ENCODE measurements at regions of chr11 and their contacts with region 1.

Region 1: GRCh38 chr11:66311965-66312548 is 4.8 kb downstream of the CD248 start:
- DNase-seq: peak; percentile 96 to 100 (median 99)
- H3K4me3 ChIP-seq: peak overlapping the region; percentile 66
- H3K4me3 Mint-ChIP-seq: peak overlapping the region; percentile 87 to 94 (median 93)
- H3K27ac ChIP-seq: peak overlapping the region; percentile 66
- H3K27ac Mint-ChIP-seq: peak overlapping the region; percentile 91 to 99 (median 98)
- H3K4me1 ChIP-seq: peaks cover 33% of the 10 kb centered on the region
- H3K4me1 Mint-ChIP-seq: peaks cover 19 to 34% (median 30%) of the 10 kb centered on the region in 3 donors
- H3K27me3 ChIP-seq: no peaks in the 10 kb centered on the region
- H3K27me3 Mint-ChIP-seq: peaks cover 0 to 3% of the 10 kb centered on the region in 2 donors

Region 2: GRCh38 chr11:66051766-66052663 is 260.0 kb before region 1 on chr11 and contains the start of gene SF3B2:
- CTCF ChIA-PET with region 1: no interaction called
- POLR2A ChIA-PET with region 1: no interaction called
- DNase-seq: peak; percentile 93 to 97 (median 95)
- H3K4me3 ChIP-seq: peak within 1 kb of the TSS; percentile 79
- H3K4me3 Mint-ChIP-seq: peak within 1 kb of the TSS; percentile 98 to 100 (median 99)
- H3K27ac ChIP-seq: peak within 1 kb of the TSS; percentile 86
- H3K27ac Mint-ChIP-seq: peak within 1 kb of the TSS; percentile 96 to 99 (median 99)
- H3K4me1 ChIP-seq: peaks cover 23% of the 10 kb centered on the region
- H3K4me1 Mint-ChIP-seq: peaks cover 27 to 38% (median 34%) of the 10 kb centered on the region in 3 donors
- H3K27me3 ChIP-seq: no peaks in the 10 kb centered on the region
- H3K27me3 Mint-ChIP-seq: peaks cover 4 to 6% of the 10 kb centered on the region in 2 donors
- total RNA-seq, gene SF3B2: 261 to 274 TPM

Region 3: DNA sequence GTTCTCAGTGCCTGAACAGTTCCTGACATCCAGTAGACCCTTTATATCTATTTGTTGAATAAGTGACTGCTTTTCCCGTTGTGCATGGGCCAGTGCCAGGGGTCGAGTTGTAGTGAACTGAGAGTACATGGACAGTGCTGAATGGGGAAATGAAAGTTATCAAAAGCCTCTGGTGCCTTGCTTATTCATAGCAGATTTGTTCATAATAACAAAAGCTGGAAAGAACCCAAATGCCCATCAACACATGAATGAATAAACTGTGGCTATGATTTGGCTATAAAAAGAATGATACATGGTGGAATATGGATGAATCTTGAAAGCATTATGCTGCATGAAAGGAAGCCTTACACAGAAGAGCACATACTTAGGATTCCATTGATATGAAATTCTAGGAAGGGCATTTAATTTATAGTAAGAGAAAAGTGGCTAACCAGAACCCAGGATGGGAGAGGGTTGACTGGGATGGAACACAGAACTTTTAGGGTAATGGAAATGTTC is 199.4 kb before region 1 on chr11:
- CTCF ChIA-PET with region 1: no interaction called
- POLR2A ChIA-PET with region 1: no interaction called
- DNase-seq: no peak
- H3K4me3 ChIP-seq: no peak overlapping the region
- H3K4me3 Mint-ChIP-seq: peak overlapping the region in 5 of 7 donors; percentile 2 to 58 (median 25)
- H3K27ac ChIP-seq: no peak overlapping the region
- H3K27ac Mint-ChIP-seq: peak overlapping the region; percentile 64 to 88 (median 80)
- H3K4me1 ChIP-seq: peaks cover 84% of the 10 kb centered on the region
- H3K4me1 Mint-ChIP-seq: peaks cover 89 to 99% (median 97%) of the 10 kb centered on the region in 3 donors
- H3K27me3 ChIP-seq: no peaks in the 10 kb centered on the region
- H3K27me3 Mint-ChIP-seq: no peaks in the 10 kb centered on the region

Region 4: DNA sequence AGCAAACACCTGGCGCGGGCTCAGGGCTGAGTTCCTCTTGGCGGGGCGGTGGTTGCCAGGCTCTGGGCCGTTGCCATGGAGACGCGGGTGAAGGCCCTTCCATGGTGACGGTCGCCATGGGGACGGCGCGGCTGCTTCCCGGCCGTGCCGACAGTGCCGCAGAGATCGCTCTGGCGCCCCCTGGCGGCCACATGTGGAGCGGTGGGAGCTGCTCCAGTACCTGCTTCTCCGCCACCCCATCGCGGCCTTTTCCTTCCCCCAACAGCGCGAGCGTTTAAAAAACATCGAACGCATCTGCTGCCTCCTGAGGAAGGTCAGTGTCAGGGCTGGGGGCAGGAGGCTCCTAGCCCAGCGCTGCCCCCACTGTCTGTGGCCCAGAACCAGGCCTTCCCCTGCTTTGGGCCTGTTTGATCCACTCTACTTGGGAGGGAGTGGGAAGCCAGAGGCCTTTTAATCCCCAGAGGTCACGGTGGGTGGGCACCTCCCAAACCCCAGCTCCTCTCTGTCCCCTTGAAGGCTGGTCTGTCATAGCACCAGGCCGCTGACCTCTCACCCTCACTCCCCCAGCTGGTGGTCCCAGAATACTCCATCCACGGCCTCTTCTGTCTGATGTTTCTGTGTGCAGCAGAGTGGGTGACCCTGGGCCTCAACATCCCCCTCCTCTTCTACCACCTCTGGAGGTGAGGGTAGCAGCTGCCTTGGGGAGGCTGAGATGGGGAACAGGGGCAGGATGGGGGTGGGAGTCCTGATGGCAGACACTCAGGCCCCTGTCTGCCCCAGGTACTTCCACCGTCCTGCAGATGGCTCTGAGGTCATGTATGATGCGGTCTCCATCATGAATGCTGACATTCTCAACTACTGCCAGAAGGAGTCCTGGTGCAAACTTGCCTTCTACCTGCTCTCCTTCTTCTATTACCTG is 29.3 kb before region 1 on chr11:
- CTCF ChIA-PET with region 1: interaction called, 39 read pairs
- POLR2A ChIA-PET with region 1: interaction called, 3 read pairs
- DNase-seq: peak; percentile 98 to 100 (median 100)
- H3K4me3 ChIP-seq: no peak overlapping the region
- H3K4me3 Mint-ChIP-seq: peak overlapping the region; percentile 35 to 85 (median 56)
- H3K27ac ChIP-seq: no peak overlapping the region
- H3K27ac Mint-ChIP-seq: peak overlapping the region; percentile 54 to 97 (median 92)
- H3K4me1 ChIP-seq: peaks cover 35% of the 10 kb centered on the region
- H3K4me1 Mint-ChIP-seq: peaks cover 31 to 49% (median 37%) of the 10 kb centered on the region in 3 donors
- H3K27me3 ChIP-seq: no peaks in the 10 kb centered on the region
- H3K27me3 Mint-ChIP-seq: peaks cover 0 to 7% of the 10 kb centered on the region in 2 donors

Region 5: GRCh38 chr11:66299186-66299585 is 12.9 kb before region 1 on chr11:
- CTCF ChIA-PET with region 1: interaction called, 36 read pairs
- POLR2A ChIA-PET with region 1: no interaction called
- DNase-seq: no peak
- H3K4me3 ChIP-seq: no peak overlapping the region
- H3K4me3 Mint-ChIP-seq: no peak overlapping the region
- H3K27ac ChIP-seq: no peak overlapping the region
- H3K27ac Mint-ChIP-seq: peak overlapping the region in 1 of 8 donors; percentile 44
- H3K4me1 ChIP-seq: no peaks in the 10 kb centered on the region
- H3K4me1 Mint-ChIP-seq: no peaks in the 10 kb centered on the region
- H3K27me3 ChIP-seq: no peaks in the 10 kb centered on the region
- H3K27me3 Mint-ChIP-seq: peaks cover 3 to 4% of the 10 kb centered on the region in 2 donors

Region 6: DNA sequence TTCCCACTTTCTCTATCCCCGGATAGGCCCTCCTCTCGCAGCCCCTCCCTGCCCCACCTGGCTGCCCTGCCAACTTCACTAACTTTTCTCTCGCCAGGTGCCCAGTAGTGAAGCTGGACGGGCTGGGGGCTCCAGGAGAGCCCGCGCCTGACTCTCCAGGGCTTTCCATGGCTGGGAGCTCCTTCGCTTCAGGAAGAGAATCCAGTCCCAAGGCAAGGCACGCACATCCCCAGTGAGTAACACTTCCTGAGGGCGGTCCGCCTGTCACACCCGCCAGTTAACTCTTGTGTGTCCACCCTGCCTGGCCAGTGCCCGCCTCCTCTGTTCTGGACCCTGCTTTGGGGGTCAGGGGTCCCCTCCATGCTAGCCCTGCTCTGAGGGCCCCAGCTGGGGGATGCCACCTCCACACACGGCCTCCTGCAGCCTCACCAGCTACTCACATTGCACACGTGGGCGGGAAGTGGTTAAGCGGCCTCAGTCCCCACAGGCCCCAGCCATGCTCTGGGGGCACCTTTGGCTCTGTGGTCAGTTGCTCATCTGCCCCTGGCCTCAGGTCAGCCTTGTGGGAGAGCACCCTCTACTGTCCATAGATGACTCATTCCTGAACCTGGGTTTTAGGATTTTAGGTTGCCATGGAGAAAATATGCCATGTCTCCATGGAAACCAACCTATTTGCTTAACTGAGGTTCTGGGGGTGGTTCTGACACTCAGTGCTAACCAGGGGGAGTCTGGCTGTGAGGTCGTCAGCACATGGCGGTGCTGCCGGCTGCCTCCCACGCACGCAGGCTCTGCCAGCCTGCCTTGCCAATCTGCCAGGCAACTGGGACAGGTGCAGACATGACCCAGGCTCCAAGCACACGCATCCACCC is 24.4 kb after region 1 on chr11 and contains the start of gene RIN1:
- CTCF ChIA-PET with region 1: interaction called, 72 read pairs
- POLR2A ChIA-PET with region 1: interaction called, 12 read pairs
- DNase-seq: peak; percentile 24 to 75 (median 57)
- H3K4me3 ChIP-seq: peak within 1 kb of the TSS; percentile 39
- H3K4me3 Mint-ChIP-seq: peak within 1 kb of the TSS; percentile 65 to 87 (median 78)
- H3K27ac ChIP-seq: peak within 1 kb of the TSS; percentile 6
- H3K27ac Mint-ChIP-seq: peak within 1 kb of the TSS; percentile 70 to 96 (median 82)
- H3K4me1 ChIP-seq: peaks cover 18% of the 10 kb centered on the region
- H3K4me1 Mint-ChIP-seq: peaks cover 12 to 30% (median 18%) of the 10 kb centered on the region in 3 donors
- H3K27me3 ChIP-seq: no peaks in the 10 kb centered on the region
- H3K27me3 Mint-ChIP-seq: peaks cover 0 to 1% of the 10 kb centered on the region in 2 donors
- total RNA-seq, gene RIN1: 1.5 to 1.7 TPM

Region 7: GRCh38 chr11:66371627-66372415 is 59.8 kb after region 1 on chr11 and contains the start of gene SLC29A2:
- CTCF ChIA-PET with region 1: interaction called, 19 read pairs
- POLR2A ChIA-PET with region 1: interaction called, 22 read pairs
- DNase-seq: peak; percentile 68 to 86 (median 74)
- H3K4me3 ChIP-seq: peak within 1 kb of the TSS; percentile 66
- H3K4me3 Mint-ChIP-seq: peak within 1 kb of the TSS; percentile 85 to 95 (median 90)
- H3K27ac ChIP-seq: peak within 1 kb of the TSS; percentile 72
- H3K27ac Mint-ChIP-seq: peak within 1 kb of the TSS; percentile 78 to 95 (median 90)
- H3K4me1 ChIP-seq: peaks cover 7% of the 10 kb centered on the region
- H3K4me1 Mint-ChIP-seq: peaks cover 10 to 19% (median 19%) of the 10 kb centered on the region in 3 donors
- H3K27me3 ChIP-seq: no peaks in the 10 kb centered on the region
- H3K27me3 Mint-ChIP-seq: peaks cover 0 to 3% of the 10 kb centered on the region in 2 donors
- total RNA-seq, gene SLC29A2: 7.9 to 8.5 TPM

Measured in CD8-positive, alpha-beta memory T cell (primary cell).